ENCODE measurements at regions of chr5 and their contacts with region 1.

Region 1: DNA sequence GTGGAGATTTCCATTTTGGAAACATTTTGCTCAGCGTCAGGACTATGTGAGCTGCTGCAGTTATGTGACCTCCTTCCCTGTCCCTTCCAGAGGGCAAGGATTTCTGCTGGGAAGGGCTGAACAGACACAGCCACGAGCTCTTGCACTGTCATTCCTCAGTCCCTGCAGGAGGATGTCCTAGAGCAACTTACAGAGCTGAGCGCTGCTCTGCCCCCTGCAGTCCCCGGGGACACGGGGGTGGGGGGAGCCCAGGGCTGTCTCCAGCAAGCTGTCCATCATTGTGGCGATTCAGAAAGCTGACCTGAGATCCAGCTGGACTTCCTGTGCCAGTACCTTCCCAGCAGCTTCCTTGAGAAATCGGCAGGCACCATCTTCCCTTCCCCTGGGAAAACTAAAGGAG is 28.0 kb upstream of the MAP1B start:
- DNase-seq: peak; percentile 51
- ATAC-seq: peak; percentile 95
- H3K4me3 Mint-ChIP-seq: no peak overlapping the region
- H3K27ac Mint-ChIP-seq: no peak overlapping the region
- H3K4me1 Mint-ChIP-seq: peaks cover 28% of the 10 kb centered on the region
- H3K27me3 Mint-ChIP-seq: no peaks in the 10 kb centered on the region
- CTCF ChIP-seq: no peak

Region 2: GRCh38 chr5:72065751-72066255 is 13.5 kb before region 1 on chr5:
- CTCF ChIA-PET with region 1: interaction called, 17 read pairs
- POLR2A ChIA-PET with region 1: no interaction called
- DNase-seq: peak; percentile 82
- ATAC-seq: peak; percentile 89
- H3K4me3 Mint-ChIP-seq: peak overlapping the region; percentile 22
- H3K27ac Mint-ChIP-seq: peak overlapping the region; percentile 98
- H3K4me1 Mint-ChIP-seq: peaks cover 50% of the 10 kb centered on the region
- H3K27me3 Mint-ChIP-seq: no peaks in the 10 kb centered on the region
- CTCF ChIP-seq: no peak